Posterior vena cava (tissue), 2 donors: ENCODE measurements at regions of chr9 and their contacts with region 1.

Region 1: GRCh38 chr9:23811633-23812032 is 14.4 kb downstream of the ELAVL2 start:
- DNase-seq: no peak

Region 2: GRCh38 chr9:24382566-24382965 is 570.9 kb after region 1 on chr9:
- intact Hi-C with region 1: loop called in 1 of 2 experiments (anchors 5 kb)
- DNase-seq: no peak